ENCODE measurements at regions of chr9 and their contacts with region 1.

Region 1: GRCh38 chr9:136482793-136483588 is at the start of gene SEC16A:
- DNase-seq: peak; percentile 99 to 100
- ATAC-seq: peak; percentile 83 to 91 (median 87)
- H3K4me3 ChIP-seq: peak within 1 kb of the TSS; percentile 77 to 96 (median 84)
- H3K27ac ChIP-seq: peak within 1 kb of the TSS; percentile 93 to 100 (median 99)
- H3K4me1 ChIP-seq: peaks cover 8 to 50% (median 26%) of the 10 kb centered on the region in 9 donors
- H3K27me3 ChIP-seq: no peaks in the 10 kb centered on the region
- CTCF ChIP-seq: no peak
- total RNA-seq, gene SEC16A: 21.9 to 35.9 (median 28.6) TPM

Region 2: DNA sequence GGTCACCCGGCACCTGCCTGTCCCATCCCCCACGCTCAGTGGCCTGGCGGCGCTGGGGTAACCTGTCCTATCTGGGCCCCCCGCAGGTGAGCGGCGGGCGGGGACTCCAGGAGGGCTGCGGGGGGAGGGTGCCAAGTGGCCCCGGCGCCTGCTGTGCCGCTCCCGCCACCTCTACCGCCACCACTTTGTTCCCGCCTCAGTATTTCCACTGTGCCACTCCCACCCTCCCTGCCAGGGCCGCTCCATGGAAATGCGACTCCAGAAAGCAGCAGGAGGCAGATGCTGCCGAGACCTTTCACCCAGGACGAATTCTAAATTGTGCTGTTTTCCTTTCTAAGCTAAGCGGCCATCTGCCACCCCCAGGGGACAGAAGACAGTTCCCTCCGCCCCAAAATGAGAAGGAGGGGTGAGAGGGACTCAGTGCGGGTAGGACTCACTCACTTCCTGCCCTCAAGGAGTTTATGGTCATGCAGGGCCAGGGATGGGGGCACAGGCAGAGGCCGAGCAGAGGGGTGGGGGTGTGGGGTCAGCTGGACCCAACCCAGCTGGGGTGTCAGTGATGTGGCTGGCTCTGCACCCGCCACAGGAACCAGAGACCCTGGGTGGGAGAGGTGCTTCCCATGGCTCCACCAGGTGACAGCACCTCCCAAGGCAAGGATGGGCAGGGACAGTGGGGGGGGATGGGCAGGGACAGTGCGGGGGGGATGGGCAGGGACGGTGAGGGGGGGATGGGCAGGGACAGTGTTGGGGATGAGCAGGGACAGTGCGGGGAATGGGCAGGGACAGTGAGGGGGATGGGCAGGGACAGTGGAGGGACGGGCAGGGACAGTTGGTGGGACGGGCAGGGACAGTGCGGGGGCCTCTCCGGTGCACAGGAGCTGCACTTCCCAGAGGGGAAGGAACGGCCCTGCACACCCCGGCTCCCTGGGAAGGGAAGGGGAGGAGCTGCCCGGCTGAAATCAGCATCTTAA is 45.0 kb after region 1 on chr9:
- intact Hi-C with region 1: loop called in 1 of 10 experiments (anchors 5 kb)
- DNase-seq: no peak
- ATAC-seq: peak in 1 of 8 donors; percentile 1
- H3K4me3 ChIP-seq: peak overlapping the region in 3 of 10 donors; percentile 2 to 7 (median 4)
- H3K27ac ChIP-seq: peak overlapping the region in 9 of 10 donors; percentile 66 to 88 (median 80)
- H3K4me1 ChIP-seq: peaks cover 47 to 98% (median 82%) of the 10 kb centered on the region in 9 donors
- H3K27me3 ChIP-seq: peaks cover 0 to 5% (median 0%) of the 10 kb centered on the region in 7 donors
- CTCF ChIP-seq: peak in 1 of 9 donors; percentile 3

Region 3: GRCh38 chr9:136539427-136540421 is 56.7 kb after region 1 on chr9:
- intact Hi-C with region 1: loop called in 3 of 10 experiments (anchors 5 to 10 kb)
- DNase-seq: peak; percentile 89 to 97
- ATAC-seq: peak; percentile 74 to 92 (median 84)
- H3K4me3 ChIP-seq: peak overlapping the region in 8 of 10 donors; percentile 9 to 96 (median 46)
- H3K27ac ChIP-seq: peak overlapping the region; percentile 76 to 100 (median 90)
- H3K4me1 ChIP-seq: peaks cover 38 to 94% (median 87%) of the 10 kb centered on the region in 9 donors
- H3K27me3 ChIP-seq: no peaks in the 10 kb centered on the region
- CTCF ChIP-seq: no peak

Region 4: DNA sequence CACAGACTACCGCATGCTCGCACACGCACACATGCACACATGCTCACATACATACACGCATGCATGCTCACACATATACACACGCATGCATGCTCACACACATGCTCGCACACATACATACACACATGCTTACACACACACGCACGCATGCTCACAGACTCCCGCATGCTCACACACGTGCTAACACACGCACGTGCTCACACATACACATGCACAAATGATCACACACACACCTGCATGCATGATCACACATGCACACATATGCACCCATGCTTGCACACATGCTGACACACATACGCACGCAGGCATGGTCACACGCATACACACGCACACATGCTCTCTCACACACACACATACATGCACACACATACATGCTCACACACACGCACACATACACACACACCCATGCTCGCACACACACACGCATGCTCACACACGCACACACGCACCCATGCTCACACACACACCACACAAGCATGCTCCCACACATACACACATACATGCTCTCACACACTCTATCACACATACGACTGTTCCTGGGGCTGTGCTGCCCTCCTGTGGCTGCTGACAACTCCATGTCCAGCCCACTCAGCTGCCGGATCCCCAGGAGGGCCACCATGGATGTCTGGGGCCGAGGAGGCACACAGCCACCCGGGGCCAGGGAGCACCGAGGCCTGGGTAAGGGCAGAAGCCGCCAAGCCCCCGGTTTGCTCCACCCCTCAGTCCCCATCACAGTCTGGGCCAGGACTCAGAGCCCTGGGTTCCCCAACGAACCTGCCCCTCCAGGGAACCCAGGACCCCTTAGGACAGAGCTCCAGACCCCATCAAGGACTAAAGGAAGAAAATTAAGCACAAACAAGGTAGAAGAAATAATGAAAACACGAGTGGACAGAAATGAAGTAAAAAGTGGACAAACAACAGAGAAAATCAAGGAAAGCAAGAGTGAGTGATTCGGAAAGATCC is 148.3 kb after region 1 on chr9:
- intact Hi-C with region 1: loop called in 8 of 10 experiments (anchors 1 to 2 kb)
- DNase-seq: peak; percentile 82 to 86
- ATAC-seq: peak; percentile 86 to 95 (median 92)
- H3K4me3 ChIP-seq: no peak overlapping the region
- H3K27ac ChIP-seq: no peak overlapping the region
- H3K4me1 ChIP-seq: peaks cover under 1 to 28% (median 17%) of the 10 kb centered on the region in 9 donors
- H3K27me3 ChIP-seq: peaks cover 0 to 18% (median 0%) of the 10 kb centered on the region in 7 donors
- CTCF ChIP-seq: peak; percentile 75 to 90 (median 87)

Region 5: GRCh38 chr9:136686794-136687711 is 204.1 kb after region 1 on chr9 and contains the start of gene AGPAT2:
- intact Hi-C with region 1: loop called in 3 of 10 experiments (anchors 5 kb)
- DNase-seq: peak; percentile 85 to 88
- ATAC-seq: peak; percentile 50 to 83 (median 66)
- H3K4me3 ChIP-seq: peak within 1 kb of the TSS; percentile 63 to 94 (median 82)
- H3K27ac ChIP-seq: peak within 1 kb of the TSS; percentile 74 to 96 (median 93)
- H3K4me1 ChIP-seq: peaks cover 25 to 96% (median 57%) of the 10 kb centered on the region in 9 donors
- H3K27me3 ChIP-seq: no peaks in the 10 kb centered on the region
- CTCF ChIP-seq: peak in 3 of 9 donors; percentile 6 to 15 (median 15)
- total RNA-seq, gene AGPAT2: 48.1 to 83.3 (median 58.4) TPM

Region 6: DNA sequence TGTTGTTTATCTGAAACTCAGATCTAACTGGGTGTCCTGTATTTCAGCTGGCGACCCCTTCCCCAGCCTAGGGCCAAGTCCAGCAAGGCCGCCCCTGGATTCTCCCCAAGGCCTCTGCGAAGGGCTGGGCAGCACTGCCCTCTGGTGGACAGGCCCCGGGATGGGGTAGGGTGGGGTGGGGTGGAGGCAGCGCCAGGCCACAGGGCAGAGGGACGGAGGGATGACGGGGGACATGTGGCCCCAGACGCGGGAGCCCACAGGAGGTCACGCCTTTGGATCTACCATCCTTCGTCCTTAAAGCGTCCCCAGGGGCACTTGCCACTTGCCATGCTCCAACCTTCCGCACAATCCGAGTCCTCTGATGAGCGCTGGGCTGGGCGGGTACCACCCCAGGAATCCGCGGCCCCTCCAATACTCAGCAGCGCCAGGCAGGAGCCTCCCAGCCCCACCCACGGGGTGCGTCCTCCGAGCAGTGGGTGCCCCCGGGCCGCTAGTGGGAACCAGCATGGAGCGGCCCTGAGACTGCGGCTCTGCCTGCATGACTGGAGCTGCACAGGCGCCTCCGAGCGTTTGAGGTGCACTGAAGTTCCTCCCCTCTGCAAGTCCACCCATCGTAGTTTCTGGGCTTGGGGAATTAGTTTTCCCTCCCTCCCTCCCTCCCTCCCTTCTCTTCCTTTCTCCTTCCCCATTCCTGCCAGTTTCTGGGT is 211.4 kb after region 1 on chr9:
- intact Hi-C with region 1: loop called in 3 of 10 experiments (anchors 5 kb)
- DNase-seq: peak; percentile 70 to 79
- ATAC-seq: peak; percentile 29 to 64 (median 50)
- H3K4me3 ChIP-seq: no peak overlapping the region
- H3K27ac ChIP-seq: no peak overlapping the region
- H3K4me1 ChIP-seq: peaks cover 10 to 62% (median 40%) of the 10 kb centered on the region in 9 donors
- H3K27me3 ChIP-seq: peaks cover 0 to 1% (median 0%) of the 10 kb centered on the region in 7 donors
- CTCF ChIP-seq: peak; percentile 50 to 84 (median 77)

Region 7: GRCh38 chr9:137223078-137223970 is 740.3 kb after region 1 on chr9:
- intact Hi-C with region 1: no loop called
- DNase-seq: peak; percentile 96 to 98
- ATAC-seq: peak; percentile 90 to 97 (median 95)
- H3K4me3 ChIP-seq: peak overlapping the region; percentile 64 to 94 (median 76)
- H3K27ac ChIP-seq: peak overlapping the region; percentile 70 to 96 (median 92)
- H3K4me1 ChIP-seq: peaks cover 14 to 46% (median 32%) of the 10 kb centered on the region in 9 donors
- H3K27me3 ChIP-seq: peaks cover 0 to 8% (median 4%) of the 10 kb centered on the region in 7 donors
- CTCF ChIP-seq: no peak

Measured in heart right ventricle (tissue), 16 donors.